H1 (cell line): ENCODE measurements at regions of chrX and their contacts with region 1.

Region 1: DNA sequence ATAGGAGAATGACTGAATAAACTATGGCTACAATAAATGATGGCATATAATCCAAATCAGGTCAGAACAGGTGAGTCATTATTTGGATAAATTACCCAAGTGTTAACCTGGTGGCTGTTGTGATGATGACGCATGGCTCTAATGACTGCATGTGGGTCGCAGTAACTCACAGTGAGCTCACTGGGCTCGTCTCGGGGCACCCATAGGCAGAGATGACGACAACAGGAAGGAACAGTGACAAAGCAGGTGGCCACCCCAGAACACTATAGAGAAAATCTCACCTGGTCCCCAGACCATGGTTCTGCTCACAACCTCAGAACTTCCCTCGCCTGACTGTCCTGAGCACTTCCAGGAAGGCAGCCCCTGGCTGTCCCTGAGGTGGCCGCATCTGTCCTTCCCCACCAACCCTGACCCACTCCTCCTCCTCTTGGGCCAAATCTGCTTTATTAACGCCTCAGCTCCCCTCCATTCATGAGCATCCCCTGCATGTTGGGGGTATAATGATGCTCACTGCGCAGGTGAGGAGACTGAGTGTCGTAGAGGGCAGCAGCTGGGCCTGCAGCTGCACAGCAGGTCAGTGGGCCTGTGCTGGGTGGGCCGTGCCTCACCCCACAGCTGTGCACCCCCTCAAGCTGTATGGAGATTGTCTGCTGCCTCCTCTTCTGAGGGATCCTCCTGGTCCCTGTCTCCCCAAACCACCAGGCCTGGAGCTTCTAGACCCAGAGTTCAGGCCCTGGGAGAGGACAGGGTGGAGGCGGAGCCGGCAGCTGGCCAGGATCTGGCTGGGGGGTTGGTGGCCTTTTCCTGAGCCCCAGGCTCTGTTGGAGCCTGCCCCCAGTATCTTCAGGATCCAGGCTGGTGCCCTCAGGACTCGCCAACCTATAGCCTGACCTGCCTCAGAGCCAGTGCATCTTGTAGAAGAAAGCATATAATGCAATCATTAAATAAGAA is 30.9 kb upstream of the FAM156A start:
- DNase-seq: no peak
- H3K4me3 ChIP-seq: no peak overlapping the region
- H3K27ac ChIP-seq: no peak overlapping the region
- H3K4me1 ChIP-seq: no peaks in the 10 kb centered on the region
- H3K27me3 ChIP-seq: no peaks in the 10 kb centered on the region
- CTCF ChIP-seq: no peak
- EP300 ChIP-seq: no peak
- POLR2A ChIP-seq: no peak
- RAD21 ChIP-seq: no peak

Region 2: DNA sequence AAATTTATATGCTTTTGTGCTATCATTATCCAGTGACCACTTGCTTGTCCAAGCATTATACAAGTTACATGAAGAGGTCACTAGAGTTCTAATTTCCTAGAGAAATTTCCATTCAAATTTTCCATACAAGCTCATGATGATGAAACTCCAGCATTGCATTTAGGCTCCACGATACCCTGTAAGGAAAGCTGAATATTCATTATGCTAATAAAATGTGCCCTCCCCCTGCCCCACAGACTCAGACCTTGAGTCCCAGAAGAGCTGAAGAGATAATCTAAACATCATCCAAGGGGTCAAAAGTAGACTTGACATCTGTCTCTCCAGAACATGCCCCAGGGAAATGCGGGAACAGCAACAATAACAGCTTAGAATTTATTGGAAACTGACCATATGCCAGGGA is 11.3 kb before region 1 on chrX:
- CTCF ChIA-PET with region 1: interaction called, 12 read pairs
- POLR2A ChIA-PET with region 1: no interaction called
- DNase-seq: no peak
- H3K4me3 ChIP-seq: no peak overlapping the region
- H3K27ac ChIP-seq: no peak overlapping the region
- H3K4me1 ChIP-seq: peaks cover 0 to 5% (median 0%) of the 10 kb centered on the region in 4 experiments; a peak in 1 of 7 replicates
- H3K27me3 ChIP-seq: no peaks in the 10 kb centered on the region
- CTCF ChIP-seq: no peak
- EP300 ChIP-seq: no peak
- POLR2A ChIP-seq: no peak
- RAD21 ChIP-seq: no peak